ENCODE measurements at regions of chr4 and their contacts with region 1.

Region 1: DNA sequence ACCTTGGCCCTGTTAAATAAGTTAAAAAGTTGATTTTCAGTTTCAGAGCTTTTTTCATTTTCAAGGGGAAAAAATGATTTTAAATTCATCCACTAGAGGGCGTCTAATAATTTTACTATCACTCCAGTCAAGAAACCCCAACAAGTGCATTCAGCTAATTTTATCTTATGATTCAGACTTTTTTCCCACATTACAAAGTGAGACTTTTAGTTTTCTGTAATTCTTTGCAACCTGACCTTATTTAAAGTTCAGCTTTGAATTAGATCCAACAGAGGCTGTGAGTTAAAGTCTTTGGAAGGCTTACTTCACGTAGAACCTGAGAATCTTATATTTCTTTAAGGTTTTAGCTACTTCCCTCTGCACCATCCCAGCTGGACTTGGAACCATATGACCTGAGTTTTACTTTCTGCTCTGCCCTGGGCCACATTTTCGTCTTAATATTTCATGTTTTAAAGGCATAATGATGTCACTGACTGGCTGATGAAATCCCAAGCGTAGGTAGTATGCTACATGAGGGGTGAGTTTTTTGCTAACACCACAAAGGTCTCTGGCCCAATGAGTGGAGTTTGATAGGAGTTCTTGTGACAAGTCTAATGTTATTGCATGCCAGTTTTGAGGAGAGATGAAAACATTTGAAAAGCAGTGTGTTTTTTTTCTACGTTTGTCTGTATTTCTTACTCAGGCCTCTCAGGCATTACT is 7.2 kb downstream of the GNRHR start:
- DNase-seq: no peak
- H3K4me3 Mint-ChIP-seq: no peak overlapping the region
- H3K27ac Mint-ChIP-seq: no peak overlapping the region
- H3K4me1 Mint-ChIP-seq: peaks cover 2% of the 10 kb centered on the region
- H3K27me3 Mint-ChIP-seq: no peaks in the 10 kb centered on the region

Region 2: GRCh38 chr4:67765928-67766327 is 19.0 kb after region 1 on chr4:
- CTCF ChIA-PET with region 1: interaction called, 15 read pairs
- DNase-seq: no peak
- H3K4me3 Mint-ChIP-seq: no peak overlapping the region
- H3K27ac Mint-ChIP-seq: no peak overlapping the region
- H3K4me1 Mint-ChIP-seq: peaks cover 5% of the 10 kb centered on the region
- H3K27me3 Mint-ChIP-seq: no peaks in the 10 kb centered on the region

Measured in activated naive CD4-positive, alpha-beta T cell treated with anti-CD3 and anti-CD28 coated beads, Interleukin-2, amount 10 ng/mL, durations not matched to agents 7 days and 5 days (primary cell).